Lower leg skin (tissue), 4 donors: ENCODE measurements at regions of chrX and their contacts with region 1.

Region 1: GRCh38 chrX:14164828-14165227 is 135.1 kb upstream of the GEMIN8 start:
- DNase-seq: no peak
- H3K4me3 ChIP-seq: no peak overlapping the region
- CTCF ChIP-seq: no peak
- POLR2A ChIP-seq: no peak

Region 2: DNA sequence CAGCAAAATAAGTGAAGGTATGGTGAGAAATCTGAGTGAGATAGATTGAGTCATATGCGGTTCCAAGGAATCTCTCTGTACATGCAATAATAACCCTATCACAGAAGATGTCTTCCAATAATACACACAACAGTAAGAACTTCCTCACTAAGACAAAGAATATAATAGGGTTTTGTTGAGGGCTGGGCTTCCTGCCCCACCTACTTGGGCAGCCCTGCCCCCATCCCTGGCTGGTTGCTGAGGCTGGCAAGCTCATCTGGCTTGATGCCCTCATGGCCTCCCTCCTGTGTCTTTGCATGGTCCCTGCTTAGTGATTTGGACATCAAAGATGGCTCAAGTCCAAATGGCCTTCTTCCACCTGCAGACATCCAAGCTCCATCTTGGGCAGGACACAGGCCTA is 137.8 kb before region 1 on chrX:
- intact Hi-C with region 1: no loop called
- DNase-seq: no peak
- H3K4me3 ChIP-seq: no peak overlapping the region
- CTCF ChIP-seq: no peak
- POLR2A ChIP-seq: no peak

Region 3: DNA sequence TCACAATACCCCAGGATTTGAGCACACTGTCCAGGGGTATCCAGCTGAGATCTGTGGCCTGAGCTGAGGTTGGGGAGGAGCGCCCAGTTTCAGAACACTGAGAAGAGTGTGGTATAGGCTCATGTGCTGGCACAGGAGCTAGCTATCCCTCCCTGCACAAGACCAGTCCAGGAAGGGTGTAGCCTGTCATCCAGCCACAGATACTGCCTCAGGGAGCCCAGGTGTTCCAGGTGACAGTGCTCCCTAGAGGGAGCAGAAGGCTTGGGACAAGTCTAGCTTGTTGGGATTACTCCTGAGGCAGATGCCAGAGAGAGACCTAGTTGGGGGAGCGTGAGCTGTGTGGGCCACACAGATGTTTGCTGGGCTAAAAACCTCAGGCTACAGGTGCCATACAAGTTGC is 285.0 kb after region 1 on chrX:
- intact Hi-C with region 1: loop called (anchors 5 kb)
- DNase-seq: no peak
- H3K4me3 ChIP-seq: no peak overlapping the region
- CTCF ChIP-seq: no peak
- POLR2A ChIP-seq: no peak